Naive thymus-derived CD4-positive, alpha-beta T cell (primary cell): ENCODE measurements at regions of chr17 and their contacts with region 1.

Region 1: GRCh38 chr17:42067351-42068091 is 17.1 kb upstream of the C17orf113 start:
- DNase-seq: peak; percentile 31 to 72 (median 58)
- ATAC-seq: peak; percentile 63
- H3K4me3 ChIP-seq: no peak overlapping the region
- H3K4me3 Mint-ChIP-seq: no peak overlapping the region
- H3K27ac ChIP-seq: no peak overlapping the region
- H3K27ac Mint-ChIP-seq: peak overlapping the region in 1 of 9 donors; percentile 36
- H3K4me1 ChIP-seq: peaks cover 7 to 30% of the 10 kb centered on the region in 2 donors
- H3K4me1 Mint-ChIP-seq: peaks cover 9 to 30% (median 23%) of the 10 kb centered on the region in 7 donors
- H3K27me3 ChIP-seq: peaks cover 0 to 2% of the 10 kb centered on the region in 2 donors
- H3K27me3 Mint-ChIP-seq: peaks cover 4 to 21% (median 11%) of the 10 kb centered on the region in 5 donors

Region 2: DNA sequence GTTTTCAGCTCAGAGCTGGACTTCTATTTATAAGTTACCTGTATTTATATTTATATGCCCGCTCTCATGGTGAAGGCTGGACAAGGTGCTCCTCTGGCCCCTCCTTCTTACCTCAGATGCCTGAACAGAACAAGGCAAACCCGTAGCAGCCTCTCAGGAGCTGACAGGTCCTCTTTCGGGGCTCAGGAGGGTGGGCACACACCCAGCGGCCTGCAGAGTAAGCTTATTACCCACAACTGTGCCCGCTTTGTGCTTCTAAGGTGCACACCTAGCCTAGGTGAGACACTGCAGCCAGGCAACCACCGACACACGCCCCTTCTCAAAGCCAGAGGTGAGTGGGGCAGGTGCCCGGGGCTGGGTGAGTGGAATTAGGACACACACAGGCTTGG is 42.3 kb before region 1 on chr17:
- CTCF ChIA-PET with region 1: interaction called, 8 read pairs
- POLR2A ChIA-PET with region 1: no interaction called
- intact Hi-C with region 1: loop called (anchors 1 kb)
- DNase-seq: no peak
- ATAC-seq: no peak
- H3K4me3 ChIP-seq: no peak overlapping the region
- H3K4me3 Mint-ChIP-seq: no peak overlapping the region
- H3K27ac ChIP-seq: no peak overlapping the region
- H3K27ac Mint-ChIP-seq: peak overlapping the region in 3 of 9 donors; percentile 18 to 75 (median 37)
- H3K4me1 ChIP-seq: peaks cover 9 to 11% of the 10 kb centered on the region in 2 donors
- H3K4me1 Mint-ChIP-seq: peaks cover 6 to 26% (median 24%) of the 10 kb centered on the region in 7 donors
- H3K27me3 ChIP-seq: no peaks in the 10 kb centered on the region
- H3K27me3 Mint-ChIP-seq: peaks cover 0 to 8% (median 0%) of the 10 kb centered on the region in 5 donors

Region 3: GRCh38 chr17:42101513-42102319 is 34.2 kb after region 1 on chr17:
- CTCF ChIA-PET with region 1: interaction called, 6 read pairs
- POLR2A ChIA-PET with region 1: no interaction called
- intact Hi-C with region 1: loop called (anchors 1 to 5 kb)
- DNase-seq: peak in 7 of 9 donors; percentile 34 to 77 (median 44)
- ATAC-seq: peak; percentile 72
- H3K4me3 ChIP-seq: no peak overlapping the region
- H3K4me3 Mint-ChIP-seq: no peak overlapping the region
- H3K27ac ChIP-seq: no peak overlapping the region
- H3K27ac Mint-ChIP-seq: no peak overlapping the region
- H3K4me1 ChIP-seq: peaks cover 6 to 8% of the 10 kb centered on the region in 2 donors
- H3K4me1 Mint-ChIP-seq: peaks cover 0 to 12% (median 10%) of the 10 kb centered on the region in 7 donors
- H3K27me3 ChIP-seq: no peaks in the 10 kb centered on the region
- H3K27me3 Mint-ChIP-seq: peaks cover 0 to 15% (median 9%) of the 10 kb centered on the region in 5 donors

Region 4: DNA sequence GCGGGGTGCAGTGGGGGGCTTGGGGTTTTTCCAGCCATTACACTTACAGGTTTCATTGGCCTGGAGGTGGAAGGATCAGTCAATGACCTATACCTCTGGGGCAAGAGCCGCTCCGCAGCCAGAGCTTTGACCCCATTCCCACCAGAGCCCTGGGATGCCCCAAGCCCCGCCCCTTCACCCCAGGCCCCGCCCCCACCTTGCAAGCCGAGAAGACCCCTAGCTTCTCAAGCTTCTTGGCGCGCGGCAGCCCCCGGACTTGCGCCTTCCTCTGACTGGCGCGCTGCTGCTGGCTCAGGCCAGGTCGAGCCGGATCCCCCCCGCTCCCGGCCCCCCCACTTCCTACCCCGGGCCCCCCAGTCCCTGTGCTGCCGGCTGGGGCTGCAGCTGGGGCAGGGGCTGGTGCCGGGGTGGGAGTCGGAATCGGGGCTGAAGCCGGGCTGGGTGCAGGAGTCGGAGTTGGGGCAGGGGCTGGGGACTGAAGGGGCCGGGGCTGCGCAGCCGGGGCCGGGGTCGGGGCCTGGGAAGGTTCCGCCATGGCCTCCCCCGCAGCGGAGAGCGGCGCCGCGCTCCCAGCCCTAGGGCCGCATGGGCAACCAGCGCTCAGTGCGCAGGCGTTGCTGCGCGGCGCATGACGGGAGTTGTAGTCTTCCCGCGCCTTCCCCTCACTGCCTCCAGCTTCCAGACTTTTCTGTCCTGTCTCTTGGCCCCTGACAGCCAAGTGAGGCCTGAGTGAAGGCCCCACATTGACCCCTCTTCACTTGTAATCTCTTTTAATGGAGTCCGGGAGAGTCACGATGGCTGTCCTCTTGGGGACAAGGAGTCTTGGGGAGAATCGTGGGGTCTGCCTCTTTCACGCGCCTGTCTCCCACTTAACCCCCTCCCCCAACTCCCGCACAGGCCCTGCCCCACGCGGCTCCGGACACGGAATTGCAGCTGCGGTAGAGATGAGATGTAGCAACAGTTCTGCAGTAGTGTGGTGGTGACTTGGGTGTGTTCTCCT is 53.5 kb after region 1 on chr17 and contains the start of gene KAT2A:
- CTCF ChIA-PET with region 1: interaction called, 21 read pairs
- POLR2A ChIA-PET with region 1: interaction called, 5 read pairs
- intact Hi-C with region 1: loop called (anchors 1 kb)
- DNase-seq: peak; percentile 48 to 80 (median 68)
- ATAC-seq: peak; percentile 92
- H3K4me3 ChIP-seq: peak within 1 kb of the TSS; percentile 56
- H3K4me3 Mint-ChIP-seq: peak within 1 kb of the TSS; percentile 58 to 85 (median 74)
- H3K27ac ChIP-seq: peak within 1 kb of the TSS; percentile 75
- H3K27ac Mint-ChIP-seq: peak within 1 kb of the TSS in 8 of 9 donors; percentile 31 to 79 (median 68)
- H3K4me1 ChIP-seq: peaks cover 4 to 15% of the 10 kb centered on the region in 2 donors
- H3K4me1 Mint-ChIP-seq: peaks cover 10 to 35% (median 21%) of the 10 kb centered on the region in 7 donors
- H3K27me3 ChIP-seq: no peaks in the 10 kb centered on the region
- H3K27me3 Mint-ChIP-seq: no peaks in the 10 kb centered on the region
- total RNA-seq, gene KAT2A: 39.6 to 71.1 (median 49.1) TPM

Region 5: GRCh38 chr17:42193969-42194899 is 126.7 kb after region 1 on chr17 and contains the start of gene GHDC:
- CTCF ChIA-PET with region 1: no interaction called
- POLR2A ChIA-PET with region 1: no interaction called
- intact Hi-C with region 1: no loop called
- DNase-seq: peak; percentile 48 to 83 (median 75)
- ATAC-seq: peak; percentile 94
- H3K4me3 ChIP-seq: peak within 1 kb of the TSS; percentile 98
- H3K4me3 Mint-ChIP-seq: peak within 1 kb of the TSS; percentile 93 to 99 (median 95)
- H3K27ac ChIP-seq: peak within 1 kb of the TSS; percentile 82
- H3K27ac Mint-ChIP-seq: peak within 1 kb of the TSS; percentile 86 to 94 (median 90)
- H3K4me1 ChIP-seq: peaks cover 4 to 19% of the 10 kb centered on the region in 2 donors
- H3K4me1 Mint-ChIP-seq: peaks cover 13 to 33% (median 23%) of the 10 kb centered on the region in 7 donors
- H3K27me3 ChIP-seq: no peaks in the 10 kb centered on the region
- H3K27me3 Mint-ChIP-seq: no peaks in the 10 kb centered on the region
- total RNA-seq, gene GHDC: 15.5 to 29.8 (median 19.9) TPM

Region 6: GRCh38 chr17:42266918-42267778 is 199.6 kb after region 1 on chr17:
- CTCF ChIA-PET with region 1: no interaction called
- POLR2A ChIA-PET with region 1: no interaction called
- intact Hi-C with region 1: no loop called
- DNase-seq: peak in 5 of 9 donors; percentile 37 to 87 (median 43)
- ATAC-seq: peak; percentile 93
- H3K4me3 ChIP-seq: no peak overlapping the region
- H3K4me3 Mint-ChIP-seq: peak overlapping the region in 6 of 10 donors; percentile 3 to 48 (median 27)
- H3K27ac ChIP-seq: peak overlapping the region; percentile 58
- H3K27ac Mint-ChIP-seq: peak overlapping the region in 8 of 9 donors; percentile 58 to 99 (median 82)
- H3K4me1 ChIP-seq: peaks cover 45 to 47% of the 10 kb centered on the region in 2 donors
- H3K4me1 Mint-ChIP-seq: peaks cover 40 to 71% (median 63%) of the 10 kb centered on the region in 7 donors
- H3K27me3 ChIP-seq: no peaks in the 10 kb centered on the region
- H3K27me3 Mint-ChIP-seq: no peaks in the 10 kb centered on the region